PC-9 (cell line): ENCODE measurements at regions of chr4 and their contacts with region 1.

Region 1: DNA sequence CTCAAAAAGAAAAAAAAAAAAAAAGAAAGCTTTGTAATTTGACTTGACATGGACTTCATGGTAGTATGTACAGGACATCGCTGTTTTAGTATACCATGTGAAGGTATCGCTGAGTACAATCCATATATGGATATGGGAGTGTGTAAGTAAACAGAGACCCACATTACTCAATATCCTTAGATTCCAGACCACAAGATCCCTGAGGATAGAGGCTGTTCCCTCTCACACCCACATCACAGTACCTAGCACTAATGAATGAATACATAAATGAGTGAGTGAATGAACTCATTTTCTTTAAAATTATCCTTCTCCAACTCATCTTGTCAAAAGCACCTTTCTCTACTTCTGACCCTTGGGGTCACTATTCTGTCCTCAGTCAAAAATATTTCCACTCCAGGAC is 8.3 kb upstream of the RPS3A start:
- DNase-seq: no peak
- H3K4me3 ChIP-seq: no peak overlapping the region
- H3K27ac ChIP-seq: no peak overlapping the region
- H3K4me1 ChIP-seq: no peaks in the 10 kb centered on the region
- H3K27me3 ChIP-seq: no peaks in the 10 kb centered on the region
- CTCF ChIP-seq: no peak

Region 2: GRCh38 chr4:150033901-150034300 is 1057.2 kb before region 1 on chr4:
- CTCF ChIA-PET with region 1: interaction called, 10 read pairs
- POLR2A ChIA-PET with region 1: no interaction called
- intact Hi-C with region 1: no loop called
- DNase-seq: no peak
- H3K4me3 ChIP-seq: no peak overlapping the region
- H3K27ac ChIP-seq: no peak overlapping the region
- H3K4me1 ChIP-seq: no peaks in the 10 kb centered on the region
- H3K27me3 ChIP-seq: no peaks in the 10 kb centered on the region
- CTCF ChIP-seq: no peak

Region 3: DNA sequence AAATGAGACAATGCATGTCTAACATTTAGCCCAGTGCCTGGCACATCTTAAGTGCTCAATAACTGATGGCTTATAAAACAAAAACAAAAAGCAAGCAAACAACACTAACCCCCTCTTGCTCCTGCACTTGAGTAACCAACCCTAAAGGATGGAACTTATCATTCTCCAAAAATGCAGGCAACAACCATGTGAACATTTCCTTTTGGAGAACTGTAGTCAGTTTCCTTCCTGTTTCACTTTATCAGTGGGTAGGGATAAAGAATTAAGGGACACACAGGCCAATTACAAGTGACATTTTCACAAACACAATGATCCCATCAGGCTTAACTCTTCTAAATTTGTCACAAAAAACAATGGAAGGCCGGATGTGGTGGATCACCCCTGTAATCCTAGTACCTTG is 38.7 kb after region 1 on chr4:
- CTCF ChIA-PET with region 1: no interaction called
- POLR2A ChIA-PET with region 1: no interaction called
- intact Hi-C with region 1: no loop called
- DNase-seq: no peak
- H3K4me3 ChIP-seq: no peak overlapping the region
- H3K27ac ChIP-seq: no peak overlapping the region
- H3K4me1 ChIP-seq: no peaks in the 10 kb centered on the region
- H3K27me3 ChIP-seq: no peaks in the 10 kb centered on the region
- CTCF ChIP-seq: no peak

Region 4: DNA sequence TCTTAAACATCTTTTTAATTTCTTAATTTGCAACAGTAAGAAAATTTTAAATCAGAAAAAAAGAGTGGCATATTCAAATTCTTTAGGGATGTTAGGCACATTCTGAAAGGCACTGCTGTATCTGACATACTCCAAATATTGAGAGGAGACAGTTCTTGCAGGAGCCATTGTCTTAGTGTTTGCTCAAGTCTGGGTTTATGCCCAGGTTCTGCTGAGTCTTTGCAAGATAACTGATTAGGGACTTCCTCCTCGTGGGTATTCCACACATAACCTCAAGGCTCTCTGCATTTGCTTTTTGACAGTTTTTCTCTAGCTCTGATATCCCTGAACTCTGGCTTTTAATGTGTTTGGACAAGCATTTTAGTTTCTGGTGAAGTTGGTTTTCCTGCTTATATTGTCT is 60.9 kb after region 1 on chr4:
- CTCF ChIA-PET with region 1: no interaction called
- POLR2A ChIA-PET with region 1: no interaction called
- intact Hi-C with region 1: no loop called
- DNase-seq: no peak
- H3K4me3 ChIP-seq: no peak overlapping the region
- H3K27ac ChIP-seq: no peak overlapping the region
- H3K4me1 ChIP-seq: no peaks in the 10 kb centered on the region
- H3K27me3 ChIP-seq: no peaks in the 10 kb centered on the region
- CTCF ChIP-seq: no peak